Activated T-helper 2 cell treated with anti-CD3 and anti-CD28 coated beads, Interferon-gamma antibody, Interleukin-2, Interleukin-4, amounts not matched to agents 10 μg/mL and 5 μg/mL and 100 μg/mL, durations not matched to agents 14 hours and 24 hours and 36 hours (primary cell): ENCODE measurements at regions of chr15 and their contacts with region 1.

Region 1: GRCh38 chr15:101583284-101583683 is 68.9 kb downstream of the TM2D3 start:
- DNase-seq: no peak
- H3K4me3 Mint-ChIP-seq: no peak overlapping the region
- H3K27ac Mint-ChIP-seq: no peak overlapping the region
- H3K4me1 Mint-ChIP-seq: no peaks in the 10 kb centered on the region
- H3K27me3 Mint-ChIP-seq: peaks cover 12% of the 10 kb centered on the region

Region 2: GRCh38 chr15:101469520-101470288 is 113.6 kb before region 1 on chr15:
- intact Hi-C with region 1: no loop called
- DNase-seq: no peak
- H3K4me3 Mint-ChIP-seq: no peak overlapping the region
- H3K27ac Mint-ChIP-seq: no peak overlapping the region
- H3K4me1 Mint-ChIP-seq: no peaks in the 10 kb centered on the region
- H3K27me3 Mint-ChIP-seq: peaks cover 17% of the 10 kb centered on the region

Region 3: GRCh38 chr15:101611580-101612299 is 28.5 kb after region 1 on chr15:
- intact Hi-C with region 1: loop called (anchors 1 kb)
- DNase-seq: no peak
- H3K4me3 Mint-ChIP-seq: no peak overlapping the region
- H3K27ac Mint-ChIP-seq: no peak overlapping the region
- H3K4me1 Mint-ChIP-seq: no peaks in the 10 kb centered on the region
- H3K27me3 Mint-ChIP-seq: no peaks in the 10 kb centered on the region